Aorta (tissue), 5 donors: ENCODE measurements at regions of chr7 and their contacts with region 1.

Region 1: GRCh38 chr7:28408960-28409715 is 3.2 kb upstream of the CREB5 start:
- DNase-seq: peak; percentile 96 to 97
- ATAC-seq: peak; percentile 90
- H3K4me3 ChIP-seq: peak overlapping the region; percentile 65 to 68
- H3K27ac ChIP-seq: peak overlapping the region; percentile 20 to 53
- H3K4me1 ChIP-seq: peaks cover 1 to 6% of the 10 kb centered on the region in 2 donors
- H3K27me3 ChIP-seq: no peaks in the 10 kb centered on the region

Region 2: GRCh38 chr7:28490831-28491230 is 81.7 kb after region 1 on chr7:
- intact Hi-C with region 1: loop called in 1 of 2 experiments (anchors 5 kb)
- DNase-seq: peak; percentile 81 to 87
- ATAC-seq: peak; percentile 74
- H3K4me3 ChIP-seq: no peak overlapping the region
- H3K27ac ChIP-seq: peak overlapping the region; percentile 43 to 60
- H3K4me1 ChIP-seq: peaks cover 2 to 5% of the 10 kb centered on the region in 2 donors
- H3K27me3 ChIP-seq: no peaks in the 10 kb centered on the region

Region 3: GRCh38 chr7:28536259-28536658 is 127.1 kb after region 1 on chr7:
- intact Hi-C with region 1: loop called in 1 of 2 experiments (anchors 10 kb)
- DNase-seq: no peak
- ATAC-seq: peak; percentile 49
- H3K4me3 ChIP-seq: no peak overlapping the region
- H3K27ac ChIP-seq: no peak overlapping the region
- H3K4me1 ChIP-seq: peaks cover 0 to 4% of the 10 kb centered on the region in 2 donors
- H3K27me3 ChIP-seq: no peaks in the 10 kb centered on the region

Region 4: DNA sequence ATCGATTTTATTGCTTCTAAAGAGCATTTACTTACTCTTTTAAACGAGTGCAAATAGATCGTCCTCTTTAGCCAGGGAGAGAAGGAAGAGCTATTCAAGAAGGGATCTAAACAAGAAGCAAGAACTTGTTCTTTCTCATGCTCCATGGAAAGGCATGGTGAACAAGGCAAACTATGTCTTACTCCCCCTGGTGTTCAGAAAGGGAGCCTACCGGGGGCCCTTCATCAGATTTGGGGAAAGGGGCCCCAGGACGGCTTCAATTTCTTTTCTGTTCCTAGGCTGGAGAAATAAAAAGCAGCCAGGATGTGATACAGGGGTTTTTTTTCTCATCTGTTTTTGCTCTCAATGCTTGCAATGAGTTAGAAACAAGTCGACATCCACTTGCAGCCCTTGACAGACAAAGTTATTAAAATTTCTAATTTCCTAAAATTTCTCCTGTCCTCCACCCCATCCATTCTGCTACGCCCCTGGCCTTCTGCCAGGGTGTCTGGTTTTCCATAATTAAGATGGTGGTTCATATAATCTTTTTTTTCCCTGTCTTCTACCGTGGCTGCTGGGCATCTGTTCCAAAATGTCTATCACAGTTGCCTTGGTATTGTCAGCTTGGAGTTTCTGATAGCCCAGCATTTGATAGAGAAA is 217.6 kb after region 1 on chr7:
- intact Hi-C with region 1: loop called (anchors 2 to 5 kb)
- DNase-seq: no peak
- ATAC-seq: peak; percentile 70
- H3K4me3 ChIP-seq: no peak overlapping the region
- H3K27ac ChIP-seq: no peak overlapping the region
- H3K4me1 ChIP-seq: peaks cover 0 to 27% of the 10 kb centered on the region in 2 donors
- H3K27me3 ChIP-seq: no peaks in the 10 kb centered on the region

Region 5: GRCh38 chr7:28685644-28686417 is 276.7 kb after region 1 on chr7:
- intact Hi-C with region 1: loop called (anchors 5 kb)
- DNase-seq: peak; percentile 94 to 96
- ATAC-seq: peak; percentile 96
- H3K4me3 ChIP-seq: peak overlapping the region; percentile 85 to 88
- H3K27ac ChIP-seq: peak overlapping the region; percentile 83 to 85
- H3K4me1 ChIP-seq: no peaks in the 10 kb centered on the region
- H3K27me3 ChIP-seq: no peaks in the 10 kb centered on the region